Mammary epithelial cell (primary cell): ENCODE measurements at regions of chr2 and their contacts with region 1.

Region 1: DNA sequence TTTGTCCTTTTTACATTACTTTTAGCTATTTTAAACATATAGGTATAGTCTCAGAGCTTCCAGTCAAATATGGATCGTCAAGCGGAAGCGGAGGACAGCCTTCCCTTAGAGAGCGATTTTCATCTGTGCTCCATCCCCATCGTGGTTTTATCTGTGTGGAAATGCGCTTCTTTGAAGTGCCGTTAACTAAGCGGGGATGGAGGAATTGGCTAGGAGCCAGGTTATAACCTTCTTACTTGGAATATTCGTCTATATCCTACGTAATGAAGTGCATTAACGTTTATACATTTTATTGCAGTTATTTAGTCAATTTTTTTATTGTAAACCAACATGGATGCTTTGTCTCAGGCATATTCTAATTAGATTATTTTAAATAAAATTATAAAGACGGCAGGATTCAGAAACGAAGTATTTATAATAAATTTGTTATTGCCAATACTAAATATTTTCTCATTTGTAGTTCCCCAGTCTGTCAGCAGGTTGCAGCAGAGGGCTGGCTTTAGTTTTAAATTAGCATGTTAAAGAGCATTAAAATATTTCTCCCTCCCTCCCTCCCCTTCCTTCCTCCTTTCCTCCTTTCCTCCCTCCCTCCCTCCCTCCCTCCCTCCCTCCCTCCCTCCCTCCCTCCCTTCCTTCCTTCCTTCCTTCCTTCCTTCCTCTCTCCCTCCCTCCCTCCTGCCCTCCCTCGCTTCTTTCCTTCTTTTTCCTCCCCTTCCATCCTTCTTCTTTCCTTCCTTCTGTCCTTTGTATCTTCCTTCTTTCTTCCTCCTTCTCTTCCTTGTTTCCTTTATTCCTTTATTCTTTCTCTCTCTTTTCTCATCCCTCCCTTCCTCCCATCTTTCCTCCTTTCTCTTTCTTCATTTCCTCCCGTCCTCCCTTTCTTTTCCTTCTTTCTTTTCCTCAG is 80.6 kb upstream of the DOCK10 start:
- DNase-seq: no peak
- H3K4me3 ChIP-seq: no peak overlapping the region
- H3K27ac ChIP-seq: no peak overlapping the region
- H3K4me1 ChIP-seq: peaks cover 10% of the 10 kb centered on the region
- H3K27me3 ChIP-seq: no peaks in the 10 kb centered on the region
- CTCF ChIP-seq: peak; percentile 56 to 58

Region 2: GRCh38 chr2:225177098-225177497 is 54.3 kb after region 1 on chr2:
- CTCF ChIA-PET with region 1: no interaction called
- dilution Hi-C with region 1: no loop called
- in situ Hi-C with region 1: no loop called
- intact Hi-C with region 1: loop called (anchors 2 kb)
- DNase-seq: peak; percentile 72
- H3K4me3 ChIP-seq: no peak overlapping the region
- H3K27ac ChIP-seq: no peak overlapping the region
- H3K4me1 ChIP-seq: peaks cover 5% of the 10 kb centered on the region
- H3K27me3 ChIP-seq: no peaks in the 10 kb centered on the region
- CTCF ChIP-seq: peak in 1 of 2 donors; percentile 36

Region 3: DNA sequence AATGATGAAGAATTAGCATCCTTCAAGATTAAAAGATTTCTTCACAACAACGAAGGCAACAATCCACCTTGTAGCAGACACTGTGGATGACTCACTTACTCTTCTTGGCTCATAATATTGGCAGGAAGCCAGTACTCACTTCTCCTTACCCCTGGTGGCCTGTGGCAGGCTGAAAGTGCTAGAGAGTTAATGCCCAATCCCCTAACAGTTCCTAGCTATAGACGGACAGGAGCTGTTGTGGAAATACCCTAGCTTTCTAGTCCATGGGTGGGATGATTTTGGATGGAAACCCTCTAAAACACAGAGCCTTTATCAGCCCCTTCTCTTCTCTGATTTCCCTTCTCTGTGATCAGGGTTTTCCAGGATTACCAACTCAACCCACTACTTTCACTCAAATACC is 148.0 kb after region 1 on chr2:
- CTCF ChIA-PET with region 1: no interaction called
- dilution Hi-C with region 1: no loop called
- in situ Hi-C with region 1: no loop called
- intact Hi-C with region 1: loop called (anchors 5 kb)
- DNase-seq: peak; percentile 74
- H3K4me3 ChIP-seq: no peak overlapping the region
- H3K27ac ChIP-seq: no peak overlapping the region
- H3K4me1 ChIP-seq: peaks cover 6% of the 10 kb centered on the region
- H3K27me3 ChIP-seq: peaks cover 3% of the 10 kb centered on the region
- CTCF ChIP-seq: peak; percentile 22 to 45

Region 4: GRCh38 chr2:225650041-225650440 is 527.2 kb after region 1 on chr2:
- CTCF ChIA-PET with region 1: no interaction called
- dilution Hi-C with region 1: no loop called
- in situ Hi-C with region 1: loop called (anchors 10 to 25 kb)
- intact Hi-C with region 1: no loop called
- DNase-seq: no peak
- H3K4me3 ChIP-seq: no peak overlapping the region
- H3K27ac ChIP-seq: no peak overlapping the region
- H3K4me1 ChIP-seq: no peaks in the 10 kb centered on the region
- H3K27me3 ChIP-seq: no peaks in the 10 kb centered on the region
- CTCF ChIP-seq: no peak